ENCODE measurements at regions of chr2 and their contacts with region 1.

Region 1: DNA sequence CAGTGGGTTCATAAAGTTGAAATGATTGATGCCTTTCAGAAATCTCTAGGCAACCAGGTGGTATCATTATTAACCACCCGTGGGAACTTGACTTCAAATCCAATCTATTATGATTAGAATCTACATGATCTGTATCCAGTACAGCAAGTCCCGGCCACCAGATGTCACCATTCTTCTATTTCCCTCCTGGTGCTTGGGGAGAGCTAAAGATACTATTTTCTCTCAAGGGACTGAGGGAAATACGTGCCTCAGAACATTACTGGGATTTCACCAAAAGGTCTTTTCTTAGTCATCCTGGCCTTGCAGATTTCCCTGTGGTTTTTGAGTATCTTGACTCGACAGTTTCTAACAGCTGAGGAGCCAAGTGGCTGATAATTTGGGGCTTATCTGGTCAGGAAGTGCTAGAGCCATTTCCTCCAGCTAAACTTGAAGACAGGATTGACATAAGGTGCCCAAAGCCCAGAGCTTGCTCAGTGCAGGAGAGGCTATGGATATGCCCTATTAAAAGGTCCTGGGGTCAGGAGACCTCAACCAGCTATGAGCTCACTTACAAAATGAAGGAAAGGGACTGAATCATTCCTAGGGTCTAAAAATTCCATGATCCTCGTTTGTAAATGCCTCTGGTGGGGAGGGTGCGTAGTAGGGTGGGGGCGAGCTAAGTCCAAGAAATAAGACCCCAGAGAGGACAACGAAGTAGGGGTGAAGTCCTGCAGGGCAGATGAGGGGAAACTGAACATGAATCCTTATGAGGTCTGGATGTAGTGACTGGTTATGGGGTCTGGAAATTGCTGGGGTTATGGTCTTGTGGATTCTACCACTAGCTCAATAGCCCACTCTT is 135.4 kb upstream of the MGAT5 start:
- DNase-seq: peak; percentile 90
- H3K4me3 ChIP-seq: no peak overlapping the region
- H3K27ac ChIP-seq: no peak overlapping the region
- H3K4me1 ChIP-seq: peaks cover 6% of the 10 kb centered on the region
- H3K27me3 ChIP-seq: peaks cover 26% of the 10 kb centered on the region
- CTCF ChIP-seq: peak; percentile 84

Region 2: DNA sequence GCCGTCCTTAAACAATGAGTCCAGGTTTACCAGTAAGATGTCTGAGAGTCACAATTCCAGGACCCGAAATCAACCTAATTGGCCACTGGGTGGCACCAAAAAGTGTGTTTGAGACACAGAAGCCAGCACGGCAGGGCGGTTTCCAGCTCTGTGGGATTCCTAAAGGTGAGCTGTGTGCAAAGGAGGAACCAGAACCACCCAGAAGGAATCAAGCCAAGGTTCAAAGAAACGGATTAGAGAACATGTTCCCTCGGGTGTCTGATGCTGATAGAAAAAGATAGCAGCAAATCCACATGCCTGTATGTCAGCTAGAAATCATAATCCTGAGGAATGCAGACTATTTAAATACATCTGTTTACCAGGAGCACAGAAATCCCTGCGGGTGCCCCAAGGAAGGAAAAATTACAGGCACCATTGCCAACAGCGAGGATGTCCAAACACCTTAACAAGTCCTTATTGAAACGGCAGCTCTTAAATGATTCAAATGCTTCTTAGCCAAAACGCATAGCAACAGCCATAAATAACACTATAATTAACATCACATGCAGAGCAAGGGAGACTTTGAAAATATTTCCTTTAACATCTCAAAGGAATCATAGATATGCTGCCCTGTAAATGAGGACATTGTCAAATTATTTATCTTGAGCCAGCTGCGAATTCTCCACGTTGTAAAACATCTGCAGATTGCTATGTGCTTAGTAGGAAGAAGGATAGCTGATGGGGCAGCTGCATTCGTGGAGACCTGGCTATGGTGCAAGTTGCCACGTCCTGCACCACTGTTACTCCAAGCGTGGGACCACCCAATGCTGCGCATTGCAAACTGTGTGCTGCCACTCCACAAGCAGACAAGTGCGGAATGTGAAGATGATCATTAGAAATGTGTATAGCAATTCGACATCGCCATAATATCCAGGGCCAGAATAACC is 231.5 kb before region 1 on chr2:
- CTCF ChIA-PET with region 1: no interaction called
- POLR2A ChIA-PET with region 1: no interaction called
- intact Hi-C with region 1: loop called (anchors 5 kb)
- DNase-seq: peak; percentile 70
- H3K4me3 ChIP-seq: no peak overlapping the region
- H3K27ac ChIP-seq: no peak overlapping the region
- H3K4me1 ChIP-seq: no peaks in the 10 kb centered on the region
- H3K27me3 ChIP-seq: no peaks in the 10 kb centered on the region
- CTCF ChIP-seq: peak; percentile 81

Region 3: DNA sequence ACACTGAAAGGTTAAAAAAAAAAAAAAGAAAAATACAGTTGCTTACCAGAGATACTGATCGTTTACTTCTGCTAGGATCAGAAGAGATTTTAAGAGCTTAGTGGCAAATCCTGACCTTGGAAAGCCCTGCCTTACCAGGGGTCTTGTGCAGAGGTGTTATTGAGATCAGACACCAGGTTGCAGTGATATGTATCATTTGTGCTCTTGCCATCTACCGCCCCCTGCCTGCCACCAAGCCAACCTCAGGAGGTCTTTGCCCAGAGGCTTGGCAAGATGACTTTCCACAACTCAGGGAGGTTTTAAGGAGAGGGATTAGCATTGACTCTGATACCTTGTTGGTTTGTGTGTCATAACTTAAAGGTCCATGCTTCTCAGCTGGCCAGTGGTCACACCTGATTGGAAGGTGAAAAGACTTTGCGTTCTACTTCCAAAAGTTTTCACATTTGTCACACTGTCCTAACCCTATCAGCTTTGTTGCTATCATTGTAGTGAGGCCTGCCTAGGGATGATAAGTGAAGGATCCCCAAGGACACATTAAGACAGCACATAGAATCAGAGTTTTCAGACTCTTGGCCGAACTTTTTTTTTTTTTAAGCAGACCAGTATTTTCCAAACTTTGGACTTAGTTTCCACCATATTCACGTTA is 89.2 kb after region 1 on chr2:
- CTCF ChIA-PET with region 1: no interaction called
- POLR2A ChIA-PET with region 1: no interaction called
- intact Hi-C with region 1: loop called (anchors 5 kb)
- DNase-seq: peak; percentile 58
- H3K4me3 ChIP-seq: no peak overlapping the region
- H3K27ac ChIP-seq: no peak overlapping the region
- H3K4me1 ChIP-seq: no peaks in the 10 kb centered on the region
- H3K27me3 ChIP-seq: no peaks in the 10 kb centered on the region
- CTCF ChIP-seq: peak; percentile 73

Region 4: GRCh38 chr2:134245340-134245984 is 127.0 kb after region 1 on chr2:
- CTCF ChIA-PET with region 1: interaction called, 6 read pairs
- POLR2A ChIA-PET with region 1: no interaction called
- intact Hi-C with region 1: loop called (anchors 1 kb)
- DNase-seq: peak; percentile 66
- H3K4me3 ChIP-seq: no peak overlapping the region
- H3K27ac ChIP-seq: no peak overlapping the region
- H3K4me1 ChIP-seq: no peaks in the 10 kb centered on the region
- H3K27me3 ChIP-seq: peaks cover 6% of the 10 kb centered on the region
- CTCF ChIP-seq: peak; percentile 93

Region 5: GRCh38 chr2:134411828-134412638 is 293.5 kb after region 1 on chr2:
- CTCF ChIA-PET with region 1: interaction called, 35 read pairs
- POLR2A ChIA-PET with region 1: no interaction called
- intact Hi-C with region 1: loop called (anchors 1 kb)
- DNase-seq: peak; percentile 82
- H3K4me3 ChIP-seq: no peak overlapping the region
- H3K27ac ChIP-seq: no peak overlapping the region
- H3K4me1 ChIP-seq: no peaks in the 10 kb centered on the region
- H3K27me3 ChIP-seq: no peaks in the 10 kb centered on the region
- CTCF ChIP-seq: peak; percentile 67

Region 6: GRCh38 chr2:134454931-134455330 is 336.4 kb after region 1 on chr2:
- CTCF ChIA-PET with region 1: interaction called, 26 read pairs
- POLR2A ChIA-PET with region 1: no interaction called
- intact Hi-C with region 1: loop called (anchors 2 kb)
- DNase-seq: no peak
- H3K4me3 ChIP-seq: no peak overlapping the region
- H3K27ac ChIP-seq: no peak overlapping the region
- H3K4me1 ChIP-seq: no peaks in the 10 kb centered on the region
- H3K27me3 ChIP-seq: no peaks in the 10 kb centered on the region
- CTCF ChIP-seq: no peak